CD4-positive, alpha-beta memory T cell (primary cell): ENCODE measurements at regions of chr1 and their contacts with region 1.

Region 1: GRCh38 chr1:111755331-111756123 is at the start of gene DDX20:
- DNase-seq: peak; percentile 94 to 96 (median 95)
- H3K4me3 ChIP-seq: peak within 1 kb of the TSS; percentile 63 to 92
- H3K4me3 Mint-ChIP-seq: peak within 1 kb of the TSS; percentile 90 to 100 (median 98)
- H3K27ac ChIP-seq: peak within 1 kb of the TSS; percentile 93
- H3K27ac Mint-ChIP-seq: peak within 1 kb of the TSS; percentile 97 to 100 (median 99)
- H3K4me1 ChIP-seq: peaks cover 20% of the 10 kb centered on the region
- H3K4me1 Mint-ChIP-seq: peaks cover 26 to 36% (median 33%) of the 10 kb centered on the region in 4 donors
- H3K27me3 ChIP-seq: no peaks in the 10 kb centered on the region
- H3K27me3 Mint-ChIP-seq: peaks cover 0 to 2% of the 10 kb centered on the region in 2 donors
- total RNA-seq, gene DDX20: 22.2 to 26.0 TPM

Region 2: GRCh38 chr1:111448918-111449702 is 306.4 kb before region 1 on chr1 and contains the starts of genes ATP5PB and WDR77:
- CTCF ChIA-PET with region 1: interaction called, 4 read pairs
- POLR2A ChIA-PET with region 1: interaction called, 5 read pairs
- intact Hi-C with region 1: loop called (anchors 1 kb)
- DNase-seq: peak; percentile 94 to 97 (median 96)
- H3K4me3 ChIP-seq: peak within 1 kb of the TSS; percentile 78 to 96
- H3K4me3 Mint-ChIP-seq: peak within 1 kb of the TSS; percentile 98 to 100 (median 99)
- H3K27ac ChIP-seq: peak within 1 kb of the TSS; percentile 91
- H3K27ac Mint-ChIP-seq: peak within 1 kb of the TSS; percentile 94 to 100 (median 99)
- H3K4me1 ChIP-seq: peaks cover 77% of the 10 kb centered on the region
- H3K4me1 Mint-ChIP-seq: peaks cover 57 to 87% (median 71%) of the 10 kb centered on the region in 4 donors
- H3K27me3 ChIP-seq: no peaks in the 10 kb centered on the region
- H3K27me3 Mint-ChIP-seq: no peaks in the 10 kb centered on the region
- total RNA-seq, gene ATP5PB: 103 to 112 TPM
- total RNA-seq, gene WDR77: 26.3 to 30.3 TPM

Region 3: DNA sequence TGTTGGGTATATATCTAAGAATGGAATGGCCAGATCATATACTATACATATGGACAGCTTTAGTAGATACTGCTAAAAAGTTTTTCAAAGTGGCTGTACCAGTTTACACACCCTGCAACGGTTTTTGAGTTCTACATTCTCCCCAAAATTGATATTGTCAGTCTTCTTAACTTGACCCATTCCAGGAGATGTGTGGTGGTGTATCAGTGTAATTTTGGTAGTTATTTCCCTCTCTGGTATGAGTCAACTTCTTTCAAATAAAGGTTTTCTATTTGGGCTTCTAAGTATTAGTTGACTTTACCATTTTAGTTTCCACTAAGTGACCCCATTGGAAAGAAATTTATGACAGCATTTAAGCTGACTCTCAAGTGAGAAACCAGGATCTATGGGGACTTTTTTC is 45.5 kb before region 1 on chr1:
- CTCF ChIA-PET with region 1: interaction called, 73 read pairs
- POLR2A ChIA-PET with region 1: interaction called, 7 read pairs
- intact Hi-C with region 1: loop called (anchors 1 kb)
- DNase-seq: no peak
- H3K4me3 ChIP-seq: no peak overlapping the region
- H3K4me3 Mint-ChIP-seq: no peak overlapping the region
- H3K27ac ChIP-seq: no peak overlapping the region
- H3K27ac Mint-ChIP-seq: peak overlapping the region in 6 of 7 donors; percentile 0 to 58 (median 13)
- H3K4me1 ChIP-seq: peaks cover 3% of the 10 kb centered on the region
- H3K4me1 Mint-ChIP-seq: peaks cover 0 to 7% (median 5%) of the 10 kb centered on the region in 4 donors
- H3K27me3 ChIP-seq: no peaks in the 10 kb centered on the region
- H3K27me3 Mint-ChIP-seq: no peaks in the 10 kb centered on the region

Region 4: GRCh38 chr1:111739194-111739924 is 16.2 kb before region 1 on chr1 and contains the start of gene INKA2:
- CTCF ChIA-PET with region 1: interaction called, 10 read pairs
- POLR2A ChIA-PET with region 1: interaction called, 47 read pairs
- intact Hi-C with region 1: loop called (anchors 1 kb)
- DNase-seq: peak; percentile 44 to 64 (median 48)
- H3K4me3 ChIP-seq: peak within 1 kb of the TSS; percentile 68 to 70
- H3K4me3 Mint-ChIP-seq: peak within 1 kb of the TSS; percentile 83 to 93 (median 89)
- H3K27ac ChIP-seq: peak within 1 kb of the TSS; percentile 37
- H3K27ac Mint-ChIP-seq: peak within 1 kb of the TSS; percentile 42 to 96 (median 86)
- H3K4me1 ChIP-seq: peaks cover 28% of the 10 kb centered on the region
- H3K4me1 Mint-ChIP-seq: peaks cover 10 to 27% (median 17%) of the 10 kb centered on the region in 4 donors
- H3K27me3 ChIP-seq: peaks cover 18% of the 10 kb centered on the region
- H3K27me3 Mint-ChIP-seq: peaks cover 6 to 18% of the 10 kb centered on the region in 2 donors
- total RNA-seq, gene INKA2: 2.2 to 2.4 TPM